AG04450 (cell line): ENCODE measurements at regions of chr11 and their contacts with region 1.

Region 1: DNA sequence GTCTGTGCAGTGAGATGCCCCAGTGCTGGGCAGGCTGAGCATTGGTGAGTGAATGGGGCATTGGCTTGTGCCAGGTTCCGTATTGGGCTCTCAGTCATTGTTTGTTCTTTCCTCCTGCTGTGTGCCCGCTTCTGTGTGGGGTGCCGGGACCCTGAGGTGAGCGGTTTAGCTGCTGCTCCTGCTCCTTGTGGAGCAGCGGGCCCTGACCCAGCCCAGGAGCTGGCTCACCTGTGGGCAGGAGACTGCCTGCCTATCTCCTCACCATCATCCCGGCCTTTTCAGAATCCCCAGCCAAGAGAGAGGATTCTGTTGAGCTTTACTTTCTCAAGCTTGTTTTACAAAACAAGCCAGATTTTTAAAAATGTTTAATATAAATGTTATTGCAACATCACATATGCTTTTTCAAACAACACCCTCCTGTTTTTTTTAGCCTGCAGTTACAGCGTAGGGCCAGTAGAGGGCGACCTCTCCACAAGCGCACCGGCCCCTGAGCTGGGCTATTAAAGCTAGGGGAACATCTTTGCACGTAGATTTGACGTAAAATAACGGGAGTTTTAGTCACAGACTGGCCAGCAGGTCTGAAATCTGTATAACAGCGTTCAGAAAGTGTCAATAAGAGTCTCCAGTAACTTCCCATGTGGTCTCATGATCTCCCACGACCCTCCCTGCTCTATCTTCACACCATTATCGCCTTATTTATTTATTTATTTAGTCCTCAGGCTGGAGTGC is 25.1 kb upstream of the RELT start:
- DNase-seq: peak; percentile 57
- H3K4me3 ChIP-seq: no peak overlapping the region
- H3K27ac ChIP-seq: peak overlapping the region; percentile 57
- H3K27me3 ChIP-seq: no peaks in the 10 kb centered on the region
- CTCF ChIP-seq: peak; percentile 98

Region 2: DNA sequence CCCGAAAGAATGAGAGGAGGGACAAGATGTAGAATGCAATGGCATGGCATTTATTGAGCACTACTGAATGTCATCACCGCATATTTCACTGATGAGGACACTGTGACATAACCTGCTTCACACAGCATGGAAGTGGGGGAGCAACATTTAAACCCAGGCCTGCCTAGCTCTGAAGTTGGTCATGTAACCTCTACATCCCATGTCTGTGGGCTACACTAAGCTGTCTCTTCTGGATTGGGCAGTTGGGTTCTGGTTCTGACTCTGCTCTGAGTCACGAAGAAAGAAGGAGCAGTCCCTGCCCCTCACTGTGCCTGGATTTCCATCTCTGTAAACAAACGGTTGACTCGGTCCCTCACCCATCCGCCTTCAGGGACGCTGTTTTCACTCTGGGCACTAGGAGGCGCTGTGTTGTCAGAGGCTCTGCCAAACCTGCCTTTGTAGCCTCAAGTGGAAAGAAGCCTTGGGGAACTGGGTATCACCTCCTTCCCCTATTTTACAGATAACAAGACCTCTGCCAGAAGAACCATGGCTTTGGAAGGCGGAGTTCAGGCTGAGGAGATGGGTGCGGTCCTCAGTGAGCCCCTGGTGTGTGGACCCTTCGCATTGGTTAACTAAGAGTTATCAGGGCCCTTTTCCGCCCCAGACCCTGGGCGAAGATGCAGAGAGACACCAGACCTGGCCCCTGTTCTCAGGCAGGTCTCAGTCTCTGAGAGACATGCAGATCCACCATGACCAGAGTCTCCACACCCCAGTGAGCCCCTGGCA is 55.7 kb before region 1 on chr11:
- CTCF ChIA-PET with region 1: interaction called, 15 read pairs
- POLR2A ChIA-PET with region 1: no interaction called
- DNase-seq: no peak
- H3K4me3 ChIP-seq: no peak overlapping the region
- H3K27ac ChIP-seq: peak overlapping the region; percentile 54
- H3K27me3 ChIP-seq: no peaks in the 10 kb centered on the region
- CTCF ChIP-seq: peak; percentile 96

Region 3: DNA sequence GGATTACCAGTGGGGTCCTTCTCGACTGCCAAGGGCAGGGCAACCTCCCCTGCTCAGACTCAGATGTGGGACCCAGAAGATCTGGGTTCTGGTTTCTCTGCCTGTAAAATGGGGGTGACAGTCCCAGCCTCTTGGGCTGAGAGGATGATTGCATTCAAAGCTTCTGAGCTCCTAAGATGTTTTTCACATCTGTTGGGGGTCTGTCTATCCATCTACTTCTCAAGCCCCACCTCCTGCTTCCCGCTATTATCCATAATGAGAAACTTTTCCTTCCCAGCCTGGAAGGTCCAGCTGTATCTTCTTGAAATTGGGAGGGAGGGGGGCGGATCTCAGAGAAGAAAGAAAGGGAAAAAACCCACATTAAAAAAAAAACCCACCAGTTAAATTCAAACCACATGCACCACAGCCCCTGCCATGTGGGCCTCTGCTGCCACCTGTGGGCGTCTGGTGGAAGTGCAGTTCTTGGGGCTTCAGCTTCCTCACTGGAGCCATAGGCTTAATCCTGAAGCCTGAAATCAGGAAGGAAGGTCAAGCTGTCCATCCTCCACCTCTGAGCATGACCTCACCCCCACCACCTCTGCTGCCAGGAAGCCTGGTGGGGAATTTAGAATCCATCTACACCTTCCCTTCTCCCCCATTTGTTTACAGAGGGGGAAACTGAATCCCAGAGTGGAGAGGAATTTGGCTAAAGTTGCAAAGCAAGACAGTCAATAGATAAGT is 15.7 kb before region 1 on chr11:
- CTCF ChIA-PET with region 1: interaction called, 127 read pairs
- POLR2A ChIA-PET with region 1: no interaction called
- DNase-seq: no peak
- H3K4me3 ChIP-seq: peak overlapping the region; percentile 27; the same call in 1 of the 2 replicates
- H3K27ac ChIP-seq: peak overlapping the region; percentile 87
- H3K27me3 ChIP-seq: no peaks in the 10 kb centered on the region
- CTCF ChIP-seq: peak; percentile 98

Region 4: DNA sequence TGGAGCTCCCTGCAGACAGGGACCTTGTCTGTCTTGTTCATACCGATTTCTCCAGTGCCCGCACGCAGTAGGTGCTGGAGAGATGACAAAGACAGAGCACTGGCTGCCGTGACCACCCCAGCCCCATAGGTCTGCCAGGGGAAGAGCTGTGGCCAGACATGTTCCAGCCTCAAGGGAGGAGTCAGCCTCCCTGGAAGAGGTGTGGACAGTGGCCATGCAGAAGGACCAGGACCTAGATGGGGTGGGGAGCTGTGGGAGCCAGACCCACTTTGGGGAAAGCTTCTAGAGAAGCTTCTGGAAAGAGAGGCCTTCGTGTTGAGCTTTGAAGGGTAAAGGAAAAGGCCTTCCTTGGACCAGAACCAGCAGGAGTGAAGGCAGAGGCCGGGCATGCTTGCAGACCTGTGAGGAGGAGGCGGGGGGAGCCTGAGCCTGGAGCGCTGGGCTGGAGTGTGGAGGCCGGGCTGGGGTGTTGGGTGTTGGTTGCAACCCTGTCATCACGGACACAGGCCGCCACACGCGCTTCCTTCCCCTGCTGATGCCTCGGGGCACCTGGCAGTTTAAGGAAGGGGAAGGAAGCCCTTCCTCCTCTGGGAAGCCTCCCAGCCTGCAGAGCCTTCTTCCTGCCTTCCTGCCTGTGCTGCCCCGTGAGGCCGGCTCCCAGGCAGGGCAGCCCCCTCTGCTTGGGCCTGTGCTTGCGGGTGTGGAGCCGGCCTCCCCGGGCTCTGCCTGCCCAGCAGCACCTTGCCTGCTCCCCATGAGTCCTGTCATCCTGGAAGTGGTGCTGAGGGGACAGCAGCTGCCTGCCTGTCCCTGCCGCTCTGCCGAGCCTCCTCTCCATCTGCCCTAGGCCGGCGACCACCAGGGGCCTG is 37.4 kb after region 1 on chr11:
- CTCF ChIA-PET with region 1: interaction called, 43 read pairs
- POLR2A ChIA-PET with region 1: interaction called, 5 read pairs
- DNase-seq: no peak
- H3K4me3 ChIP-seq: no peak overlapping the region
- H3K27ac ChIP-seq: no peak overlapping the region
- H3K27me3 ChIP-seq: no peaks in the 10 kb centered on the region
- CTCF ChIP-seq: no peak

Region 5: GRCh38 chr11:73661035-73661628 is 310.1 kb after region 1 on chr11:
- CTCF ChIA-PET with region 1: interaction called, 64 read pairs
- POLR2A ChIA-PET with region 1: interaction called, 7 read pairs
- DNase-seq: peak; percentile 49
- H3K4me3 ChIP-seq: peak overlapping the region; percentile 55
- H3K27ac ChIP-seq: peak overlapping the region; percentile 11
- H3K27me3 ChIP-seq: no peaks in the 10 kb centered on the region
- CTCF ChIP-seq: peak; percentile 98